Right ventricle myocardium inferior (tissue), 1 donor: ENCODE measurements at regions of chr12 and their contacts with region 1.

Region 1: DNA sequence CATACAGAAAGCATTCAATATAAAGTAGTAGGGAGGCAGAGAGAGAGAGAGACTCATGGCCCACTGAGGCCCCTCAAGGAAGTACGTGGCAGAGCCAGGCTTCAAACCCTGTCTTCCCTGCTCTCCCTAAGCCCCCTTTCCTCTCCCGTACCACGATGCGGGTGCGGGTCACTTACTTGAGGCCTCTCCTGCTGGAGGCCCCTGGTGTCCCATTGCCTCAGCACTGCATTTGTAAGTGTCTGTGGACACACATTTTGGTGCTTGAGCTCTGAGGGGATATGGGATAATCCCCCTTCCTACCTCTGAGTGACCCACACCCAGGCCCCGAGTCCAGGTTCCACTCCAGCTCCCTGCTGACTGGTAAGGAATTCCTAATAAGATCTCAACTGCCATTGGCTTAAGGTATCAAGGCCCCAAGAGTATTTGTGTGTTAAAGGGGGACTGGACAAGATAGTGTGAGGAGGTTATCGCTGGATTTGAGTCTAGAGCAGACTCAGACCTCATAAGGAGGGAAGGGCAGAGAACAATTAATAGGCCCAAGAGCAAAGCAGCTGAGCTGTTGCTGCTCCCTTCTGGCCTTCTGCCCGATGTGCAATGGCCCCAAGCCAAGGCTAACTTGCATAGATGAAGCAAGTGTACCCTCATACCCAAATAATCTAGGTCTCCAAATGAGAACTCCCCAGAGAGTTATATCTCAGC is 71.9 kb downstream of the CRACR2A start:
- DNase-seq: peak; percentile 82
- ATAC-seq: peak; percentile 27

Region 2: GRCh38 chr12:3743803-3744202 is 62.8 kb after region 1 on chr12:
- intact Hi-C with region 1: loop called (anchors 2 kb)
- DNase-seq: no peak
- ATAC-seq: peak; percentile 88

Region 3: GRCh38 chr12:3770886-3771285 is 89.8 kb after region 1 on chr12:
- intact Hi-C with region 1: loop called (anchors 5 kb)
- DNase-seq: no peak
- ATAC-seq: no peak